CD4-positive, alpha-beta memory T cell (primary cell): ENCODE measurements at regions of chr1 and their contacts with region 1.

Region 1: GRCh38 chr1:159214149-159214760 is 9.6 kb downstream of the ACKR1 start:
- DNase-seq: peak in 4 of 5 donors; percentile 12 to 27 (median 26)
- H3K4me3 ChIP-seq: no peak overlapping the region
- H3K4me3 Mint-ChIP-seq: no peak overlapping the region
- H3K27ac ChIP-seq: no peak overlapping the region
- H3K27ac Mint-ChIP-seq: no peak overlapping the region
- H3K4me1 ChIP-seq: no peaks in the 10 kb centered on the region
- H3K4me1 Mint-ChIP-seq: peaks cover 0 to 3% (median 0%) of the 10 kb centered on the region in 4 donors
- H3K27me3 ChIP-seq: peaks cover 7% of the 10 kb centered on the region
- H3K27me3 Mint-ChIP-seq: peaks cover 24 to 38% of the 10 kb centered on the region in 2 donors

Region 2: DNA sequence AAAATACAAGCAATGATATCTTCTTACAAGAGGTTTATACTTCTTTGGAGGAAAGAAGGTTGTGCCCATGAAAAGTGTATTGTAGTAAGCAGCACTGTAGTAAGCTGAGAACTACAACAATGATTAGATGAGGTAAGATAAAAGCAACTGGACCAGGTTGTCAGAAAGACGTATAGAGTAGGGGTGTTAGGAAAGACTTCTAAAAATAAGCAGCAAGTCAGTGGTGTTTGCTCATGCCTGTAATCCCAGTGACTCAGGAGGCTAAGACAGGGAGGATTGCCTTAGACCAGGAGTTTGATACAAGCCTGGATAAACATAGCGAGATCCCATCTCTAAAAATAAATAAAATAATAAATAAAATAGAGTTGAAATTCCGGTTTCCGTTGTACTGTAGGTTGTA is 630.3 kb before region 1 on chr1:
- CTCF ChIA-PET with region 1: no interaction called
- POLR2A ChIA-PET with region 1: no interaction called
- intact Hi-C with region 1: no loop called
- DNase-seq: no peak
- H3K4me3 ChIP-seq: no peak overlapping the region
- H3K4me3 Mint-ChIP-seq: no peak overlapping the region
- H3K27ac ChIP-seq: no peak overlapping the region
- H3K27ac Mint-ChIP-seq: no peak overlapping the region
- H3K4me1 ChIP-seq: no peaks in the 10 kb centered on the region
- H3K4me1 Mint-ChIP-seq: no peaks in the 10 kb centered on the region
- H3K27me3 ChIP-seq: no peaks in the 10 kb centered on the region
- H3K27me3 Mint-ChIP-seq: peaks cover 10 to 17% of the 10 kb centered on the region in 2 donors

Region 3: DNA sequence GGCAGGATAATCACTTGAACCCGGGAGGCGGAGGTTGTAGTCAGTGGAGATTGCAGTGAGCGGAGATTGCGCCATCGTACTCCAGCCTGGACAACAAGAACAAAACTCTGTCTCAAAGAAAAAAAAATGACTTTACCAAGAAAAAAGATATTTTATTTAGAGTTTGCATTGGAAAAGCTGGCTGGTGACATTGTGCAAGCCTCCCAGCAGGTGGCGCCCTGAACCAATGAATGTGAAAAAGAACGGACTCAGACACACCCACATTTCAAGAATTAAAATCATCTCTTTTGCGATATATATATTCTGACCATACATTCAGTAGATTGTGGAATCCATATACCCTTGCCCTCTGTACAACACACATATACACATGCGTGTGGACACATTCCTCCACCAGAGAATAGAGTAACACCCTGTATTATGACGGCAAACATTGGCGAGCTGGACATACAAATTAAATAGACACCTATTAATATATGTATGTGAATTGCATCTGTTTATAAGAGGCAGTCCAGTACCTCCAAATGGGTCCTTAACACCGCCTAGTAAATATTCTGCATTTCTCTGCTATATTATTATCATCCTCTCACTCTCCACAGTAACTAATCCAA is 81.9 kb before region 1 on chr1:
- CTCF ChIA-PET with region 1: interaction called, 42 read pairs
- POLR2A ChIA-PET with region 1: no interaction called
- intact Hi-C with region 1: loop called (anchors 1 kb)
- DNase-seq: peak; percentile 41 to 59 (median 49)
- H3K4me3 ChIP-seq: no peak overlapping the region
- H3K4me3 Mint-ChIP-seq: no peak overlapping the region
- H3K27ac ChIP-seq: no peak overlapping the region
- H3K27ac Mint-ChIP-seq: no peak overlapping the region
- H3K4me1 ChIP-seq: no peaks in the 10 kb centered on the region
- H3K4me1 Mint-ChIP-seq: no peaks in the 10 kb centered on the region
- H3K27me3 ChIP-seq: no peaks in the 10 kb centered on the region
- H3K27me3 Mint-ChIP-seq: peaks cover 4 to 12% of the 10 kb centered on the region in 2 donors

Region 4: DNA sequence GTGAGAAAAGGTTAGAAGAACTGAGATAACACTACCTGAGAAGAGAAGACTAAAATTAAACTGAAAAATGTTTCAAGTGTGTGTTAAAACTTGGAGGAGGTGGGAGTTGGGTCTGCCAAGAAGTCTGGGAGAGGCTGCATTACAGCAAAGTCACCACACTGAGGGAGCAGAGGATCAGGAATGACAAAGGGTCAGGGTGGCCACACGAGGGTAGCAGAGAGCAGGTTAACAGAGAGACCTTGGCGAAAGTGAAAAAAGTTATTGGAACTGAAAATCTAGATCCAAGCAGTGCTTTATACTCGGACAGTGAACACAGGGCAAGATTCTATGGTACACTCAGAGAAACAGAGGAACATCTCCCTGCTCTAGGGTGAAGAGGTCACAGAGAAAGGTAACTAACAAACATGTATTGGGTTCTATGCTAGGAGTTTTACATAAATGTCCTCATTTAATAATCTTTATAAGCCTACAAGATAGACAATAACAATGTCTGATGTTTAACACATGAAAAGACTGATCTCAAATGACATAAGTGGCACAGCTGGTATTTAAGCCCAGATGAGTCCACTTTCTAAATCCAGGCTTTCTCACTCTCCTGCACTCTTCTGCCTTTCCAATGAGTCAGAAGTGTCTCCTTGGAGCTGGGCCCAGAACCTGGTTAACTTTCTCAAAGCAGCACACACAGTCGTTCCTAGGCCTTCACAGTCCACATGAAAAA is 53.1 kb before region 1 on chr1:
- CTCF ChIA-PET with region 1: interaction called, 13 read pairs
- POLR2A ChIA-PET with region 1: no interaction called
- intact Hi-C with region 1: loop called (anchors 1 kb)
- DNase-seq: peak; percentile 32 to 49 (median 46)
- H3K4me3 ChIP-seq: no peak overlapping the region
- H3K4me3 Mint-ChIP-seq: no peak overlapping the region
- H3K27ac ChIP-seq: no peak overlapping the region
- H3K27ac Mint-ChIP-seq: no peak overlapping the region
- H3K4me1 ChIP-seq: no peaks in the 10 kb centered on the region
- H3K4me1 Mint-ChIP-seq: peaks cover 0 to 5% (median 2%) of the 10 kb centered on the region in 4 donors
- H3K27me3 ChIP-seq: peaks cover 5% of the 10 kb centered on the region
- H3K27me3 Mint-ChIP-seq: peaks cover 28 to 30% of the 10 kb centered on the region in 2 donors

Region 5: GRCh38 chr1:159197561-159198557 is 16.4 kb before region 1 on chr1:
- CTCF ChIA-PET with region 1: interaction called, 17 read pairs
- POLR2A ChIA-PET with region 1: no interaction called
- intact Hi-C with region 1: no loop called
- DNase-seq: peak in 2 of 5 donors; percentile 9 to 15
- H3K4me3 ChIP-seq: no peak overlapping the region
- H3K4me3 Mint-ChIP-seq: no peak overlapping the region
- H3K27ac ChIP-seq: no peak overlapping the region
- H3K27ac Mint-ChIP-seq: no peak overlapping the region
- H3K4me1 ChIP-seq: no peaks in the 10 kb centered on the region
- H3K4me1 Mint-ChIP-seq: peaks cover 0 to 5% (median 3%) of the 10 kb centered on the region in 4 donors
- H3K27me3 ChIP-seq: peaks cover 8% of the 10 kb centered on the region
- H3K27me3 Mint-ChIP-seq: peaks cover 28 to 41% of the 10 kb centered on the region in 2 donors